Gastrocnemius medialis (tissue), 4 donors: ENCODE measurements at regions of chr6 and their contacts with region 1.

Region 1: DNA sequence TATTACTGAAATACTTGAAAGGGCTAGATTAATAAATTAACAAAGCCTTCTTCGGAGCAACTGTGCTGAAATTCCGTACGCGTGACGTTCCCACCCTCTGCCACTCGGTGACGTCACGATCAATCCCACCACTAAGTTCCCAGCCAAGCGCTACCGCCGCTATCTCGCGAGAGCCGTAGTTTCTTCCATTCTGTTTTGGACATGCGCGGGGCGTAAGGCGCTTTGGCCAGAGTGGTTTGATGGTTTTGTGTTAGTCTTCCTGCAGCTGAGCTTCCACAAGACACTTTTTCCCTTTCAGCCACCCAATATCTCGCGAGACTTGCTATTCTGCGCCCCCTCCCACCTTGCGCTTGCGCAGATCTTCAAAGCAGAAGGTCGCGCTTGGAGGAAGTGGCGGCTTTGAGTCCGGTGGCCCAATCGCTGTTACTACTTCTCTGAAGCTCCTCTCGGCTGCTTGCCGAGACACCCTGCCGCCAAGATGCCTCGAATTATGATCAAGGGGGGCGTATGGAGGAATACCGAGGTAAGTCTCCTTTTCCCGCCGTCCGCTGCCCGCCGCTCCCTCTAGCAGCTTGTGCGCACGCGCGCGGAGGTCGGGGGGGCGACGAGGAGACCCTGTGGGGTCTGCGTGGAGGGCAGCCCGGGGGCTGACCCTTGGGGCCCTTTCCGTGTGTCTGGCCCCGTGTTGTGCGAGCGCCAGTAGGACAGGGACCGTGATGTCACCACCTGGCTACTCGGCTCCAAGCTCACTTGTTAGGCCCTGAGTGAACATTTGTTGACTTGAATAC is at the start of gene CDC5L:
- DNase-seq: peak; percentile 88 to 94
- ATAC-seq: peak; percentile 93 to 94
- H3K4me3 ChIP-seq: peak within 1 kb of the TSS; percentile 91 to 100 (median 94)
- H3K27ac ChIP-seq: peak within 1 kb of the TSS; percentile 96 to 99 (median 96)
- H3K4me1 ChIP-seq: peaks cover 18 to 24% of the 10 kb centered on the region in 2 donors
- H3K27me3 ChIP-seq: no peaks in the 10 kb centered on the region
- CTCF ChIP-seq: peak in 1 of 5 experiments; percentile 8
- POLR2A ChIP-seq: peak; percentile 81
- total RNA-seq, gene CDC5L: 26.3 to 30.3 (median 27.7) TPM

Region 2: GRCh38 chr6:44312901-44313788 is 74.4 kb before region 1 on chr6 and contains the start of gene AARS2:
- in situ Hi-C with region 1: no loop called
- intact Hi-C with region 1: loop called (anchors 1 kb)
- DNase-seq: peak; percentile 67 to 80
- ATAC-seq: peak; percentile 95 to 98
- H3K4me3 ChIP-seq: peak within 1 kb of the TSS; percentile 72 to 99 (median 89)
- H3K27ac ChIP-seq: peak within 1 kb of the TSS; percentile 61 to 79 (median 72)
- H3K4me1 ChIP-seq: peaks cover 5 to 14% of the 10 kb centered on the region in 2 donors
- H3K27me3 ChIP-seq: peaks cover 0 to under 1% (median 0%) of the 10 kb centered on the region in 3 donors
- CTCF ChIP-seq: peak; percentile 85 to 98 (median 91)
- POLR2A ChIP-seq: peak; percentile 39 to 42
- total RNA-seq, gene AARS2: 3.9 to 6.3 (median 4.5) TPM